ENCODE measurements at regions of chr14 and their contacts with region 1.

Region 1: DNA sequence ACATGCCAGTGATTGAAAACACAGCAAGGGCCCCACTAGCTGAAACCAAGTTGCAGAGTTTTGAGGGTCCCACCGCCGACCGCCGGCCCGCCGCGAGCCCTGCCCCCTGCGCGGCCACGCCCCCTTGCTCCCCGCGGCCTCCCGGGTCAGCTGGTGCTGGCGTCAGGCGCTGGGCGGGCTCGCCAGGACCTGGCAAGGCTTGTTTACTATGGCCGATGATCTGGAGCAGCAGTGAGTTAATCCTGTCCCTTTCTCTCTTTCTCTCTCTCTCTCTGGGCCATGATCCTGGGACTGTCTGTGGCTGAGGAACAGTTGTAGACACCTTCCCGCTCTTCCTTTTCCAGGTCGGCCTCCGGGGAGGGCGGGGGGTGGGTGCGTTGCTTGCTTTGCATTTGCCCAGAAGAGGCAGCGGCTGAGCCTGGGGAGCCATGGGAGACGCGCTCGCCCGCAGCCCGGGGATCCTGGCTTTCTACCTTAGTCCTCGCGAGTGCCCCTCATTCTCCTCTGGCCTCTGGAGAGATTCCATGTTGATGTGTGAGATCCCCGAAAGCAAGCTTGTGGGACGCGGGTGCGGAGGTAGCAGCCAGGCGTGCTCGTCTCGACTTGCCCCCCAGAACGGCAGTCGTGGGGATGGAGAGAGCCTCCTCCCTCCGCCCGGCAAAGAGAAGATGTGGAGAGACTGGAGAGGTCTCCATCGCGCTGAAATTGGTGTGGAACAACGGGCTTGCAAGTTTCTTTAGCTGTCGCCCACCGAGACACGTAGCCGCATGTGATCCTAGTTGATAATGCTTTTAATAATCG is at the start of gene ABHD4:
- DNase-seq: peak; percentile 65 to 78
- ATAC-seq: peak; percentile 92
- H3K4me3 ChIP-seq: peak within 1 kb of the TSS; percentile 84
- H3K27ac ChIP-seq: peak within 1 kb of the TSS; percentile 86 to 91
- H3K4me1 ChIP-seq: peaks cover 48% of the 10 kb centered on the region
- CTCF ChIP-seq: no peak
- EP300 ChIP-seq: no peak
- POLR2A ChIP-seq: peak; percentile 43
- RAD21 ChIP-seq: no peak
- polyA plus RNA-seq, gene ABHD4: 58.3 and 75.0 TPM in 2 replicates

Region 2: GRCh38 chr14:22510527-22511110 is 87.7 kb before region 1 on chr14:
- CTCF ChIA-PET with region 1: no interaction called
- POLR2A ChIA-PET with region 1: no interaction called
- DNase-seq: no peak
- ATAC-seq: no peak
- H3K4me3 ChIP-seq: no peak overlapping the region
- H3K27ac ChIP-seq: no peak overlapping the region
- H3K4me1 ChIP-seq: no peaks in the 10 kb centered on the region
- CTCF ChIP-seq: no peak
- EP300 ChIP-seq: no peak
- POLR2A ChIP-seq: no peak
- RAD21 ChIP-seq: no peak

Region 3: GRCh38 chr14:22614224-22614799 is 16.0 kb after region 1 on chr14:
- CTCF ChIA-PET with region 1: interaction called, 51 read pairs
- POLR2A ChIA-PET with region 1: interaction called, 16 read pairs
- DNase-seq: peak; percentile 81 to 94
- ATAC-seq: peak; percentile 93 to 94
- H3K4me3 ChIP-seq: no peak overlapping the region
- H3K27ac ChIP-seq: peak overlapping the region; percentile 71 to 89
- H3K4me1 ChIP-seq: peaks cover 31% of the 10 kb centered on the region
- CTCF ChIP-seq: no peak
- EP300 ChIP-seq: peak in 1 of 2 experiments; percentile 74; a peak in 2 of 5 replicates
- POLR2A ChIP-seq: no peak
- RAD21 ChIP-seq: no peak

Region 4: DNA sequence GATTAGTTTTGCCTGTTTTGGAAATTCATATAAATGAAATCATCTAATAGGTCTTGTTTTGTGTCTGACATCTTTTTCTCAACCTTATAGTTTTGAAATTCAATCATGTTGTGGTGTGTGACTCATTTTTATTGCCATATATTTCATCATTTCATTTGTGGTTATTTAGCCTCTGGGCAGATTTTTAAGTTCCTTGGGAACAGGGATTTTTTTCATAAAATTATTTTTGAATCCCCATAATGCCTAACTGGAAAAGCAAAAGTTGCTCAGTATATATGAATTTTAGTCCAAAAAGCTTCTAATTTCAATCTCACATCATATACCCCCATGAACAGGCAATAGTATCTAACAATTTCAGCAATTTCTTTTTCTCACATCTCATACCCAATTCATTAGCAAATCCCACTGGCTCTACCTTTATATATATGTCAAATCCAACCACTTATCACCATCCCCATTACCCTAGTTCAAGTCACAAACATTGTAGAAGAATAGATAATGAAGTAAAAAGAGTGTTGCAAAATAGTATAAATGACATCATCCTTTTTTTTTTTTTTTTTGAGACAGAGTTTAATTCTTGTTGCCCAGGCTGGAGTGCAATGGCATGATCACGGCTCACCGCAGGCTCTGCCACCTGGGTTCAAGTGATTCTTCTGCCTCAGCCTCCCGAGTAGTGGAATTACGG is 48.4 kb after region 1 on chr14:
- CTCF ChIA-PET with region 1: interaction called, 84 read pairs
- POLR2A ChIA-PET with region 1: interaction called, 8 read pairs
- DNase-seq: peak in 1 of 2 experiments; percentile 27
- ATAC-seq: no peak
- H3K4me3 ChIP-seq: no peak overlapping the region
- H3K27ac ChIP-seq: peak overlapping the region; percentile 79 to 80
- H3K4me1 ChIP-seq: peaks cover 53% of the 10 kb centered on the region
- CTCF ChIP-seq: no peak
- EP300 ChIP-seq: no peak
- POLR2A ChIP-seq: no peak
- RAD21 ChIP-seq: no peak

Region 5: DNA sequence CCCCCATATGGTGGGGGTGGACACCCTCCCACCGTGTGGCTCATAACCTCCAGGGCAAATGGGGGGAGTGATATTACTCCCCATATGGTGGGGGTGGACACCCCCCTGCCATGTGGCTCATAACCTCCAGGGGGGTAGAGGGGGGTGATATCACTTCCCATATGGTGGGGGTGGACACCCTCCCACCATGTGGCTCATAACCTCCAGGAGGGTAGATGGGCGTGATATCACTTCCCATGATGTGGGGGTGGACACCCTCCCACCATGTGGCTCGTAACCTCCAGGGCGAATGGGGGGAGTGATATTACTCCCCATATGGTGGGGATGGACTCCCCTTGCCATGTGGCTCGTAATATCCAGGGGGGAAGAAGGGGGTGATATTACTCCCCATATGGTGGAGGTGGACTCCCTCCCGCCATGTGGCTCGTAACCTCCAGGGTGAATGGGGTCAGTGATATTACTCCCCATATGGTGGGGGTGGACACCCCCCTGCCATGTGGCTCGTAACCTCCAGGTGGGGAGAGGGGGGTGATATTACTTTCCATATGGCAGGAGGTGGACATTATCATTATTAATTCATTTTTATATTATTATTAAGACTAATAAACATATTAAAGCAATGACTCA is 117.0 kb after region 1 on chr14:
- CTCF ChIA-PET with region 1: interaction called, 4 read pairs
- POLR2A ChIA-PET with region 1: interaction called, 10 read pairs
- DNase-seq: no peak
- ATAC-seq: no peak
- H3K4me3 ChIP-seq: no peak overlapping the region
- H3K27ac ChIP-seq: no peak overlapping the region
- H3K4me1 ChIP-seq: peaks cover 15% of the 10 kb centered on the region; the same call in 1 of the 3 replicates
- CTCF ChIP-seq: no peak
- EP300 ChIP-seq: no peak
- POLR2A ChIP-seq: no peak
- RAD21 ChIP-seq: no peak